ENCODE measurements at regions of chr6 and their contacts with region 1.

Region 1: DNA sequence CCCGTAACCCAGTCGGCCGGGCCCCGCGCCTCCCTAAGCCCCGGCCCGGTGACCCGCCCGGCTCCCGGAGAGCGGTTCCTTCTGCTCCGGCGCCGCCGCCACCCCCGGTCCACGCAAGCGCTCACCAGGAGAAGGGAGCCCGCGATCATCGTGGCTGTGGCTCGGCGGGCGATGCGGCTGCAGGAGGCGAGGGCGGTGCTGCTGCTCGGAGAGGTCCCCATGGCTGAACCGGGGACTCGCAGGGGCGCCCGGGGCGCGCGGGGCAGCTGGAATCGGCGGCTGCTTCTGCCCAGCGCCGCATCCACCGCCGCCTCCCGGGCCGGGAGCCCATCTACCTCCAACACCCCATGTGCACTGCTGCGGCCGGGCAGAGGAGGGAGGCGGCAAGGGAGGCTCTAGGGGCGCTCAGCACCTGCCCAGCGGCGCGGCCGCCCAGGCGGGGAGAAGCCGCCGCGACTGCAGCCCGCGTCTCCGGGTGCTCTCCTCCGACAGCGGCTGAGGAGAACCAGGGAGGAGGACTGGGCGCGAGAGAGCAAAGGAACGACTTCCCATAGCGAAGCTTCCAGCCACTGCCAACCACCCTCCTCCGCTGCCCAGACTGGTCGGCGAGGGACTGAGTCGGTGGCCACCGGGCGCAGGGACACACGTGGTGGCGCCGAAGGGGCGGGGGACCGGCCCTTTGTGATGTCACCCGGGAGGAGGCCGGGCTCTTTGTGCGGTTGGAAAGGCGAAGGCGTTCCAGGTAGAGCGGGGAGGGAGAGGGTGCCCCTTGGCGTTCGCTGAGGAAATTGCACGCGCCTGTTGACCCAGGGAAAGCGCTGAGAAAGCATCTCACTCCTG is at the start of gene TNFRSF21:
- DNase-seq: peak; percentile 94
- H3K4me3 ChIP-seq: peak within 1 kb of the TSS; percentile 52 to 58
- H3K27ac ChIP-seq: peak within 1 kb of the TSS; percentile 72
- H3K4me1 ChIP-seq: no peaks in the 10 kb centered on the region
- H3K27me3 ChIP-seq: no peaks in the 10 kb centered on the region
- CTCF ChIP-seq: peak; percentile 87 to 98 (median 94)
- POLR2A ChIP-seq: peak; percentile 96
- total RNA-seq, gene TNFRSF21: 21.8 to 22.5 TPM

Region 2: DNA sequence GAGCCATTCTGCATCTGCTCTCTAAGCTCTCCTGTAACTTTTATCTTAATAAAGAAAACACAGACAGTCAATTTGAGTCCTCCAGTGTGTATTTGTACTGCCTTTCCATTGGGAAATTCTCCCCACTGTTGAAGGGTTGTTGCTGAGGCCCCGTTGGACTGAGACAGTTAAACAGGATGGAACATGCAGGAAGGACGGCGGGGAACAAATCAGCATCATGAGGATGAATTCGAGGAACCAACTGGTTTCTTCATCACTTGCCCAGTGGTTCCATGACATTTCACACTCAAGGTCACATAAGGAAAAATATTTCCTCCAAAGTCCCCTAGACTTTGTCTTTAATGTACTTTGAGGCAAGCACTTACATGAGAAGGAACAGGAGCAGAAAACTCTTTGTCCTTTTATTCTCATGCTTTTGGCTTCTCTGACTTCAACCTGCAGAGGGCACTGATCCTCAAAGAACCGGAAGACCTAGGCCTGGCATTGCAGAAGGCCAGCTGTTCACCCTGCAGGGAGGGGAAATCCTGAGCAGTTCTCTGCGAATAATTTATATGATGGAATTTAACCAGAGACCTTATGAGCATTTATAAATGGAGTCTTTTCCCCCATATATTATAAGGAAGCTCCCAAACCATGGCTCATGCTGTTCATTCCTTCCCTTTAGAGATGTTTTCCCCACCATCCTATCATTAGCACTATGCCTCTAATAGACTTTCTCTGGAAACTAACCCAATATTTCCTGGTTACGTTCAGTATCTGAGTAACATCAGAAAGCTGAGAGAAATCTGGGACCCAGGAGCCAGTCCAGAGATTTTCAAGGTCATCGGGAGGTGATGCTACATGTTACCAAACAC is 212.2 kb before region 1 on chr6:
- intact Hi-C with region 1: loop called (anchors 2 kb)
- DNase-seq: peak; percentile 78
- H3K4me3 ChIP-seq: no peak overlapping the region
- H3K27ac ChIP-seq: no peak overlapping the region
- H3K4me1 ChIP-seq: no peaks in the 10 kb centered on the region
- H3K27me3 ChIP-seq: no peaks in the 10 kb centered on the region
- CTCF ChIP-seq: peak; percentile 57 to 81 (median 68)
- POLR2A ChIP-seq: no peak